ENCODE measurements at regions of chr11 and their contacts with region 1.

Region 1: GRCh38 chr11:47269002-47269828 is 718 bp upstream of the MADD start:
- DNase-seq: peak; percentile 93
- H3K4me3 ChIP-seq: peak overlapping the region; percentile 84 to 92
- H3K27ac ChIP-seq: peak overlapping the region; percentile 97
- H3K4me1 ChIP-seq: peaks cover 26% of the 10 kb centered on the region
- H3K27me3 ChIP-seq: no peaks in the 10 kb centered on the region
- CTCF ChIP-seq: peak in 1 of 3 experiments; percentile 19
- POLR2A ChIP-seq: no peak

Region 2: GRCh38 chr11:47186076-47186936 is 82.9 kb before region 1 on chr11 and contains the start of gene PACSIN3:
- intact Hi-C with region 1: loop called (anchors 10 kb)
- DNase-seq: no peak
- H3K4me3 ChIP-seq: peak within 1 kb of the TSS; percentile 67 to 70
- H3K27ac ChIP-seq: peak within 1 kb of the TSS; percentile 42 to 62
- H3K4me1 ChIP-seq: peaks cover 10% of the 10 kb centered on the region
- H3K27me3 ChIP-seq: no peaks in the 10 kb centered on the region
- CTCF ChIP-seq: no peak
- POLR2A ChIP-seq: no peak
- total RNA-seq, gene PACSIN3: 10.8 to 12.0 TPM

Region 3: GRCh38 chr11:47233989-47234668 is 35.1 kb before region 1 on chr11:
- intact Hi-C with region 1: loop called (anchors 2 kb)
- DNase-seq: peak; percentile 60
- H3K4me3 ChIP-seq: no peak overlapping the region
- H3K27ac ChIP-seq: peak overlapping the region in 1 of 2 donors; percentile 19
- H3K4me1 ChIP-seq: no peaks in the 10 kb centered on the region
- H3K27me3 ChIP-seq: no peaks in the 10 kb centered on the region
- CTCF ChIP-seq: peak in 1 of 3 experiments; percentile 12
- POLR2A ChIP-seq: no peak